AG04449 (cell line): ENCODE measurements at regions of chr11 and their contacts with region 1.

Region 1: DNA sequence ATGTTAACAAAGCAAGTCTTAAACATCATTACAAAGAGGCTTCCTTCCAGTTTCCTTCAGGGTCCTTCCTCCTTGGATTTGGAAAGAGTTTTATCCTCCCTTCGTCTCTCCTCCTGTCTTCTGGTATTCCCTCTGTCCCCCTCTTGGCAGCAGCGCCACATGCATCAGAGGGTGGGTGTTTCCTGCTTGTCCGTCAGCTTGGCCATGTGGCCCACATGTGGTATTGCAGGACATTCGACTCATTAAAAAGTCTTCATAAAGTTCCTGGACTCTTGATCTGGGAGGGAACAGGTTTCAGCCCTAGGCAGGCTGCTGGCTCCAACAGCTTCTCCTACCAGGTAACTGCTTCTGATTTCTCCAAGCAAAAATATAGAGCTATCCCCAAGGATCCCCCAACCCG is 189.8 kb downstream of the CSNK2A3 start:
- DNase-seq: no peak
- H3K4me3 ChIP-seq: no peak overlapping the region
- CTCF ChIP-seq: peak; percentile 17

Region 2: GRCh38 chr11:11148104-11148509 is 15.1 kb before region 1 on chr11:
- CTCF ChIA-PET with region 1: interaction called, 30 read pairs
- POLR2A ChIA-PET with region 1: no interaction called
- DNase-seq: peak; percentile 79
- H3K4me3 ChIP-seq: no peak overlapping the region
- CTCF ChIP-seq: peak; percentile 49

Region 3: DNA sequence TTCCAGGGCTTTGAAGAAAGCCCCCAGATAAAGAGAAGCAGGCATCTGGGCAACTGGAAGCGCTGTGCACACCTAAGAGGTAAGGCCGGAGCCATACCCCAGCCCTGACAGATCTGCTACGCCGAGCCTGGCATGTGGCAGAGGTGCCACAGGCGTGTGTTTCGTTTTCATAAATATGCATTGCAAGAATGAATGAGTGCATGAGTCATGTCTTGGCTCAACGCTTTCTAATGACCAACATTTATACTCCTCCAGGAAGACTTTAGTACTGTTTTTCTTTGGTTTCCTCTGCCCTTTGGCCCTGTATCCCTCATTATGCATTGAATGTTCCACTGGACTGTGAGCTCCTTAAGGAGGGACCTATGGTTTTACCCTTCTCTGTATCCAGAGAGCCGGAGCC is 228.6 kb after region 1 on chr11:
- CTCF ChIA-PET with region 1: no interaction called
- POLR2A ChIA-PET with region 1: no interaction called
- DNase-seq: no peak
- H3K4me3 ChIP-seq: no peak overlapping the region
- CTCF ChIP-seq: no peak